ENCODE measurements at regions of chr4 and their contacts with region 1.

Region 1: GRCh38 chr4:77959566-77960338 is 97.1 kb downstream of the MRPL1 start:
- DNase-seq: no peak
- ATAC-seq: no peak
- H3K4me3 ChIP-seq: peak overlapping the region in 5 of 12 donors; percentile 14 to 43 (median 29)
- H3K27ac ChIP-seq: no peak overlapping the region
- H3K4me1 ChIP-seq: peaks cover 0 to 5% (median 0%) of the 10 kb centered on the region in 12 donors
- H3K27me3 ChIP-seq: no peaks in the 10 kb centered on the region
- CTCF ChIP-seq: peak; percentile 51 to 77 (median 66)
- POLR2A ChIP-seq: no peak

Region 2: GRCh38 chr4:78532046-78532445 is 572.3 kb after region 1 on chr4:
- intact Hi-C with region 1: no loop called
- DNase-seq: no peak
- ATAC-seq: peak in 1 of 4 donors; percentile 42
- H3K4me3 ChIP-seq: no peak overlapping the region
- H3K27ac ChIP-seq: no peak overlapping the region
- H3K4me1 ChIP-seq: no peaks in the 10 kb centered on the region
- H3K27me3 ChIP-seq: no peaks in the 10 kb centered on the region
- CTCF ChIP-seq: no peak
- POLR2A ChIP-seq: no peak

Region 3: DNA sequence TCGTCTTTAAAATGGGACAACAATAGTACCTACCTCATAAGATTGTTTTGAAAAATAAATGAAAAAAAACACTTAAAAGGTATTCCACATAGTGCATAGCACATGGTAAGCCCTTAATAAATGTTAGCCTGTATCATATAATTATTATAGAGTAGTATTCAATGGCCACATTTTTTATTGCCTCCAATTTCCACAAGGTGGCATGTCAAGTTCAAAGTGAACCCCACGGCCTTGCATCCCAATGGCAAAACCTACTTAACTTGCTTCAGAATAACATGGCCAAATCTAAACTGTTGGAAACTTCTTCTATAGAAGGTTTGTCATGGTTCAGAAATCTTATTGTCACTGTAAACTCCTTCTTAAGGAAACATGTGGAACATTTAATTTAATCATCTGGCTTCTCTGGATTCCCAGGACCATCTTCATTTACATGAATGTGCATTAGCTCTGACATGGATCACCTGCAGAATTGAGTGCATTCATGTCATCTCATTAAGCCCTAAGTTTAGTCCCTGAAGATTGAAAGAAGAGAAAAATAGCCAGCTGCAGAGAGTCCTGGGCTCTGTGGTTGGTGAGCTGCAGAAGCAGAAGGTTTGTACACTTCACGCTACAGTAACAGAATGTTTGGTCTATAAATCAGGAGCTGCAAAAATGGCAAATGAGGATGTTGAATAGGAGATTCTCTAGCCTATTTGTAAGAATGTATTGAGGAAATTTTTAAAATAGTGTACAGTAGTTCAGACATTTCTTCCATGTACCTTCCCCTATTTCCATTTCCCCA is 652.8 kb after region 1 on chr4:
- intact Hi-C with region 1: loop called in 1 of 10 experiments (anchors 5 kb)
- DNase-seq: peak in 4 of 5 donors; percentile 29 to 41 (median 36)
- ATAC-seq: peak; percentile 53 to 81 (median 72)
- H3K4me3 ChIP-seq: no peak overlapping the region
- H3K27ac ChIP-seq: no peak overlapping the region
- H3K4me1 ChIP-seq: peaks cover 0 to 30% (median 5%) of the 10 kb centered on the region in 12 donors
- H3K27me3 ChIP-seq: no peaks in the 10 kb centered on the region
- CTCF ChIP-seq: peak; percentile 43 to 77 (median 67)
- POLR2A ChIP-seq: no peak